ENCODE measurements at regions of chr2 and their contacts with region 1.

Region 1: DNA sequence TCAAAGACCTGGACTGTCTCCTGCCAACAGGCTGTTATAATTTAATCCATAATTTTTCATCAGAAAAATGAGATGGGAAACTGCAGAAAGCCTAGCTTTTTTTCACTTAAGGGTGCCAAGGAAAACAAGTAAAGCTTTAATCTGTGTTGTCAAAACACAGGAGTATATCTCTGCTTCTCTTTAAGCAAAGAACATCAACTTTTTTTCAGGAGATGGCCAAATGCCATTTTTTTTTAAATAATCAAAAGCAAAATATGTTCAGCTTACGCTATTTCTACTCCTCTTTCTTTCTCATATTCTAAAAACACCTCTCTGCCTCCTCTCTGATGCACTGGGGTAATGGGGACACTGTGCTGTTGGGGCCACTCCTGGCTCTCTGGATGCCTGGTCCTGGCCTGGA is 73.1 kb upstream of the NXPH2 start:
- DNase-seq: no peak
- H3K4me3 ChIP-seq: no peak overlapping the region
- H3K27ac ChIP-seq: no peak overlapping the region
- H3K4me1 ChIP-seq: no peaks in the 10 kb centered on the region
- H3K27me3 ChIP-seq: no peaks in the 10 kb centered on the region
- CTCF ChIP-seq: no peak

Region 2: DNA sequence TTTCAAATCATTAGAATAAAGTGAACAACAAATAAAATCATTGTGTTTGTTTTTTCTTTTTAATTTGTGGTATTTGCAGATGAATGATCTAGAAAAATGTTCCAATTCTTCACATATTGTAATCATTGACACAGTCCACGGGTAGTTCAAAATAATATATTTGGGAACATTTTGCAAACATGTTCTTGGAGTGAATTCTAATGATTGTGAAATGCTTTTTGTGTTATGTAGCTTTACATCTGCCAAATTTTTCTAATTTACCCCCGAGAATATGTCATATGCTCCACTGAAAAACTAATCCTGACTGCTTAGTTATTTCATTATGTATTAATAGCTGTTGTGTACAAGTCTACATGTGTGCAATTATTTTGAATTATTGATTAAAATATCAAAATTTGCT is 1395.3 kb after region 1 on chr2:
- CTCF ChIA-PET with region 1: no interaction called
- POLR2A ChIA-PET with region 1: interaction called, 11 read pairs
- intact Hi-C with region 1: no loop called
- DNase-seq: no peak
- H3K4me3 ChIP-seq: no peak overlapping the region
- H3K27ac ChIP-seq: no peak overlapping the region
- H3K4me1 ChIP-seq: no peaks in the 10 kb centered on the region
- H3K27me3 ChIP-seq: no peaks in the 10 kb centered on the region
- CTCF ChIP-seq: no peak

Measured in PC-9 (cell line).